ENCODE measurements at regions of chr22 and their contacts with region 1.

Region 1: GRCh38 chr22:19891317-19892256 is 36.9 kb upstream of the GNB1L start:
- DNase-seq: peak; percentile 39 to 89 (median 86)
- ATAC-seq: peak; percentile 90
- H3K4me3 ChIP-seq: peak overlapping the region; percentile 67
- H3K4me3 Mint-ChIP-seq: peak overlapping the region; percentile 80 to 91 (median 86)
- H3K27ac ChIP-seq: peak overlapping the region; percentile 84
- H3K27ac Mint-ChIP-seq: peak overlapping the region; percentile 92 to 100 (median 99)
- H3K4me1 ChIP-seq: peaks cover 35 to 96% of the 10 kb centered on the region in 2 donors
- H3K4me1 Mint-ChIP-seq: peaks cover 37 to 96% (median 84%) of the 10 kb centered on the region in 7 donors
- H3K27me3 ChIP-seq: no peaks in the 10 kb centered on the region
- H3K27me3 Mint-ChIP-seq: no peaks in the 10 kb centered on the region

Region 2: DNA sequence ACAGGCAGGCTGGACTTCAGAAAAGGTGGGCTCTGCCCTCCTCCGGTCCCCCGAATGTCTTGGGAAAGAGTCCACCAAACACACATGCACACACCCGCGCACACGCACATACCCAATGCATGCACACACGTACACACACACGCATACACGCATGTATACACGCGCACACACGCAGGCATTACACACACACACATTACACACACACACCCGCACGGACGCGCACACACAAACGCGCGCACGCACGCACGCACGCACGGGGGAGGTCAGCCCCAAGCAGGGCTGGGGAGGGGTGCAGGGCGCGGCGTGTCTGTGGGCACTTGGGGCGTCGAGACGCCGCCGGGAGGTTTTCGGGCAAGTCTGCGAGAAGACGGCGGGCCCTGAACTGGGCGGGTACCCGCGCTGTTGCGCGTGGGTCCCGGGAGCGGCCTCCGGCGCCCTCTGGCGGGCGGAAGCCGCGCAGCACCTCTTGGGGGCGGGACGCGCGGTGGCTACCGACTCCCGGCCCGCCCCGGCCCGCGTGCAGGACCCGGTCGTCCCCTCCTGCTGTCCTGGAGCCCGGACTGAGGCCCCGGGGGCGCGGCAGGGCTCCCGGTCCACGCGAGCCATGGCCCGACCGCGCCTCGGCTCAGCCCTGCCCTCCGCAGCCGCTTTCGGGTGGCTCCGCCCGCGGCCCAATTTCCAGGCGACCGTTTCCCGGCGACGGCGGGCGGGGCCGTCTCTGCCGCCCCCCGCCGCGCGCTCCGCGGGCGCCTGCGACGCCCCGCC is 173.7 kb before region 1 on chr22:
- CTCF ChIA-PET with region 1: no interaction called
- POLR2A ChIA-PET with region 1: no interaction called
- intact Hi-C with region 1: loop called in 1 of 2 experiments (anchors 5 kb)
- DNase-seq: peak; percentile 68 to 93 (median 86)
- ATAC-seq: peak; percentile 97
- H3K4me3 ChIP-seq: peak overlapping the region; percentile 41
- H3K4me3 Mint-ChIP-seq: peak overlapping the region; percentile 72 to 88 (median 82)
- H3K27ac ChIP-seq: no peak overlapping the region
- H3K27ac Mint-ChIP-seq: peak overlapping the region in 3 of 9 donors; percentile 5 to 14 (median 9)
- H3K4me1 ChIP-seq: peaks cover 0 to 10% of the 10 kb centered on the region in 2 donors
- H3K4me1 Mint-ChIP-seq: peaks cover 0 to 10% (median 8%) of the 10 kb centered on the region in 7 donors
- H3K27me3 ChIP-seq: peaks cover 0 to 3% of the 10 kb centered on the region in 2 donors
- H3K27me3 Mint-ChIP-seq: peaks cover 28 to 59% (median 35%) of the 10 kb centered on the region in 5 donors

Region 3: DNA sequence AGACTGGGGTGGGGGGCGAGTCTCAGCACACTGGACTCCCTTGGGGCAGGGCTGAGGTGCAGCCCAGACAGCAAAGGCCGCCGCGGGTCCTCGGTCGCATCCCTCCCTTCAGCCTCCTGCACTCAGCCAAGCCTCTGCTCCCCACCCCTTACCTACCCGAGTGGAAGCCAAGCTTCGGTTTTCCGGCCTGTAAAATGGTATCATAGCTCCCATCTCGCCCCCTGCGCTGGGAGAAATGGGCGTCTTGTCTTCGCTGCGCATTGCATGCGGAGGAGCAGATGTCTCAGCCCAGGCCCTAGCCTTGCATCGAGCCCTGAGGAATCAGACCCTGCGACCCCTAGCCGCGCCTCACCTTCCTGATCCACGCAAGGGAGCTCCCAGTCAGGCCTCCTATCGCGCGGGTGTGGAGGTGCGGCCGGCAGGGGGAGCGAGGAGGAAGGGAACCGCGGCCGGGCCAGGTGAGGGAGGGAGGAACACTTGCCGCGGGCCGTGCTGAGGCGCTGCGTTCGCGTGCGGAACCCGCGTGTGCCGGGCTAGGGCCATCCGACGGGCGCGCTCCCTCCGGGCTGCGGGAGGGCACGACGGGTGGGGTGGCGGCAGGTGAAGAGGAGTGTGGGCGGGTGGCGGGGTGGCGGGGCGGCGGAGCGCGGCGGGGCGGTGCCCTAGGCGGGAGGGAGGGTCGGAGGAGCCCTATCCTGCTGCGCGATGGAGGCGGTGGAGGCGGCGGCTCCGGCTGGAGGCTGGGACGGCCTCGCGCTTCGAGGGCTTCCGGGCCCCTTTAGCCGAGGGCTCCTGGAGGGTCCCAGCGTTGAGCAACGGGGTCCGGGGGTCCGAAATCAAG is 135.1 kb before region 1 on chr22:
- CTCF ChIA-PET with region 1: interaction called, 4 read pairs
- POLR2A ChIA-PET with region 1: interaction called, 4 read pairs
- intact Hi-C with region 1: loop called in 1 of 2 experiments (anchors 1 kb)
- DNase-seq: peak; percentile 56 to 79 (median 70)
- ATAC-seq: peak; percentile 79
- H3K4me3 ChIP-seq: peak overlapping the region; percentile 39
- H3K4me3 Mint-ChIP-seq: peak overlapping the region; percentile 62 to 89 (median 74)
- H3K27ac ChIP-seq: no peak overlapping the region
- H3K27ac Mint-ChIP-seq: no peak overlapping the region
- H3K4me1 ChIP-seq: peaks cover 8 to 23% of the 10 kb centered on the region in 2 donors
- H3K4me1 Mint-ChIP-seq: peaks cover 19 to 41% (median 25%) of the 10 kb centered on the region in 7 donors
- H3K27me3 ChIP-seq: peaks cover 0 to 11% of the 10 kb centered on the region in 2 donors
- H3K27me3 Mint-ChIP-seq: peaks cover 39 to 67% (median 53%) of the 10 kb centered on the region in 5 donors

Region 4: GRCh38 chr22:19854778-19855503 is 36.6 kb before region 1 on chr22 and contains the starts of genes GNB1L and RTL10:
- CTCF ChIA-PET with region 1: interaction called, 9 read pairs
- POLR2A ChIA-PET with region 1: interaction called, 154 read pairs
- intact Hi-C with region 1: loop called (anchors 1 kb)
- DNase-seq: peak; percentile 91 to 97 (median 94)
- ATAC-seq: peak; percentile 97
- H3K4me3 ChIP-seq: peak within 1 kb of the TSS; percentile 64
- H3K4me3 Mint-ChIP-seq: peak within 1 kb of the TSS; percentile 94 to 99 (median 96)
- H3K27ac ChIP-seq: peak within 1 kb of the TSS; percentile 87
- H3K27ac Mint-ChIP-seq: peak within 1 kb of the TSS; percentile 90 to 96 (median 93)
- H3K4me1 ChIP-seq: peaks cover 19 to 21% of the 10 kb centered on the region in 2 donors
- H3K4me1 Mint-ChIP-seq: peaks cover 38 to 78% (median 65%) of the 10 kb centered on the region in 7 donors
- H3K27me3 ChIP-seq: no peaks in the 10 kb centered on the region
- H3K27me3 Mint-ChIP-seq: no peaks in the 10 kb centered on the region
- total RNA-seq, gene GNB1L: 4.2 to 14.1 (median 9.5) TPM
- total RNA-seq, gene RTL10: 18.2 to 36.8 (median 24.9) TPM

Region 5: GRCh38 chr22:19909350-19910179 is 18.0 kb after region 1 on chr22:
- CTCF ChIA-PET with region 1: interaction called, 10 read pairs
- POLR2A ChIA-PET with region 1: interaction called, 5 read pairs
- intact Hi-C with region 1: loop called in 1 of 2 experiments (anchors 1 kb)
- DNase-seq: peak; percentile 61 to 82 (median 76)
- ATAC-seq: peak; percentile 94
- H3K4me3 ChIP-seq: no peak overlapping the region
- H3K4me3 Mint-ChIP-seq: peak overlapping the region in 2 of 10 donors; percentile 10 to 61
- H3K27ac ChIP-seq: no peak overlapping the region
- H3K27ac Mint-ChIP-seq: peak overlapping the region in 7 of 9 donors; percentile 41 to 85 (median 78)
- H3K4me1 ChIP-seq: peaks cover 0 to 8% of the 10 kb centered on the region in 2 donors
- H3K4me1 Mint-ChIP-seq: peaks cover 2 to 17% (median 13%) of the 10 kb centered on the region in 7 donors
- H3K27me3 ChIP-seq: no peaks in the 10 kb centered on the region
- H3K27me3 Mint-ChIP-seq: no peaks in the 10 kb centered on the region

Region 6: GRCh38 chr22:20020533-20021195 is 129.1 kb after region 1 on chr22 and contains the start of gene TANGO2:
- CTCF ChIA-PET with region 1: no interaction called
- POLR2A ChIA-PET with region 1: no interaction called
- intact Hi-C with region 1: no loop called
- DNase-seq: peak; percentile 88 to 98 (median 95)
- ATAC-seq: peak; percentile 95
- H3K4me3 ChIP-seq: peak within 1 kb of the TSS; percentile 96
- H3K4me3 Mint-ChIP-seq: peak within 1 kb of the TSS; percentile 89 to 94 (median 91)
- H3K27ac ChIP-seq: peak within 1 kb of the TSS; percentile 93
- H3K27ac Mint-ChIP-seq: peak within 1 kb of the TSS; percentile 86 to 98 (median 92)
- H3K4me1 ChIP-seq: peaks cover 18 to 27% of the 10 kb centered on the region in 2 donors
- H3K4me1 Mint-ChIP-seq: peaks cover 18 to 56% (median 36%) of the 10 kb centered on the region in 7 donors
- H3K27me3 ChIP-seq: no peaks in the 10 kb centered on the region
- H3K27me3 Mint-ChIP-seq: peaks cover 0 to 23% (median 0%) of the 10 kb centered on the region in 5 donors
- total RNA-seq, gene TANGO2: 21.3 to 43.1 (median 38.6) TPM